Sigmoid colon (tissue), 7 donors: ENCODE measurements at regions of chr4 and their contacts with region 1.

Region 1: GRCh38 chr4:174120446-174121295 is 162.8 kb downstream of the FBXO8 start:
- DNase-seq: peak; percentile 74
- H3K4me3 ChIP-seq: peak overlapping the region; percentile 25 to 46 (median 39)
- H3K27ac ChIP-seq: peak overlapping the region; percentile 71 to 82 (median 75)
- H3K4me1 ChIP-seq: peaks cover 0 to 62% (median 45%) of the 10 kb centered on the region in 4 donors
- H3K27me3 ChIP-seq: no peaks in the 10 kb centered on the region
- CTCF ChIP-seq: peak; percentile 40 to 82 (median 66)
- EP300 ChIP-seq: no peak
- POLR2A ChIP-seq: peak in 1 of 2 donors; percentile 28

Region 2: DNA sequence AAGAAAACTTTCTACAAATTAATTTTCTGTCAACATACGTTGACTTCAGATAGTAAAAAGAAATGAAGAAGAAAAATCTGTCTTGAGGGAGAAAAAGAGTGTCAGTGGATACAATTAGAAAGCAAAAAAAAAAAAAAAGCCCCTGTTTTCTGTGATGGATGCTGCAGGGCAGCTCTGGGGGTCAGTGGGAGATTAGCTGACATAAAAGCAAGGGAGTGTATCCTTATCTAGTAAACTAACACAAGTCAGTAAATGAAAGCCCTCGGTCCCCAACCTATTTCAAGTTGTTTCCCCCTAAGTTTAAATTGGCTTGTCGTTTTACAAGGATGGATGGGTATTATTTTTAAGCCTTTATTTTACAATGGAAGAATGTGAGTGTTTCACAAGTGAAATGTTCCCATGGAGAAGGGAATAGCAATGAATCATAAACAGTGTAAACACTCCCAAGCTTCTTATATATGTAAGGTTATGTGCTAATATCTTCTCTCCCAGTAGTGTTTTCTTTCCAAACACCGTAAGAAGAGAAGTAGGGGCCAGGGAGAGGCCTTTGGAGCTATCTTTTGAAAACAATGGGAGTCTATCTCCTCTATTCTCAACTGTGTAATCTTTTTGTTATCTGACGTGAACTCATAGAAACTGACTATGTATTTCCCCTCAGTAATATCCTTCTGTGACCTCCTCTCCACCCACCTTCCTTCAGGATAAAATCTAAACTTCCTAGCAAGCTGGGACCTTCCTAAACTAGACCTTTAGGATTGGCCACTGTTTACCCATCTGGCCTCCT is 184.9 kb before region 1 on chr4:
- intact Hi-C with region 1: loop called (anchors 5 kb)
- DNase-seq: no peak
- H3K4me3 ChIP-seq: no peak overlapping the region
- H3K27ac ChIP-seq: peak overlapping the region; percentile 70 to 81 (median 73)
- H3K4me1 ChIP-seq: peaks cover 0 to 50% (median 43%) of the 10 kb centered on the region in 4 donors
- H3K27me3 ChIP-seq: no peaks in the 10 kb centered on the region
- CTCF ChIP-seq: no peak
- EP300 ChIP-seq: peak in 3 of 4 donors; percentile 4 to 58 (median 32)
- POLR2A ChIP-seq: no peak

Region 3: DNA sequence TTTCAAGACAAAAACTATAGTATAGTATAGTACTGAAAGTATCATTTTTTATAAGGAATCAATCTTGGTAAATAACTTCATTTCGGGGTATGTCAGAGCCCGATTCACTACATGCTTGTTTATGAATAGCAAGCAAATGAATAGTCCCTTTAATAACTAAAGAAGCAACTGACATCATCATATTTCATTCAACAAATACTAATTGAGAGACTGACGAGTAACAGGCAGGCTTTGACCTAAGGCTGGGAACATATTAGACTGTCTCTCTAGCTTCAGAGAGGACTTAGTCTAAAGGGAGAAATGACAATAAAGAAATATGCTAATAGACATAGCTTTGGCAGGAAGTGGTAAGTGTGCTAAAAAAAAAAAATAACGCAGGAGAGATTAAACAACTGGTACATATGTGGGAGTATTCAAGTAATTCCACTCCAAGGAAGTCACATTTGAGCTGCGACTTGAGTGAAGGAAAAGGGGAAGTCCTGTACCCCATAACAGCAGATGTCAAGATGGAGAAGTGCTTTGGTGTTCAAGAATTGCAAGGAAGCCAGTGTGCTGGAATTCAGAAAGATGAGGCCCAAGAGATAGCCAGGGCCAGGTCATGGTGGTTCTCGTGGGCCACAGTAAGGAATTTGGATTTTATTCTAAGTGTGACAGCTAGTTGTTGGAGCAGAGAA is 122.1 kb before region 1 on chr4:
- intact Hi-C with region 1: loop called (anchors 5 kb)
- DNase-seq: no peak
- H3K4me3 ChIP-seq: no peak overlapping the region
- H3K27ac ChIP-seq: no peak overlapping the region
- H3K4me1 ChIP-seq: no peaks in the 10 kb centered on the region
- H3K27me3 ChIP-seq: no peaks in the 10 kb centered on the region
- CTCF ChIP-seq: no peak
- EP300 ChIP-seq: no peak
- POLR2A ChIP-seq: no peak